Mammary epithelial cell (primary cell): ENCODE measurements at regions of chr10 and their contacts with region 1.

Region 1: GRCh38 chr10:131874991-131875451 is 25.8 kb upstream of the PPP2R2D start:
- DNase-seq: peak; percentile 66
- H3K4me3 ChIP-seq: no peak overlapping the region
- H3K27ac ChIP-seq: no peak overlapping the region
- H3K4me1 ChIP-seq: peaks cover 11% of the 10 kb centered on the region
- H3K27me3 ChIP-seq: no peaks in the 10 kb centered on the region
- CTCF ChIP-seq: peak; percentile 85 to 88

Region 2: DNA sequence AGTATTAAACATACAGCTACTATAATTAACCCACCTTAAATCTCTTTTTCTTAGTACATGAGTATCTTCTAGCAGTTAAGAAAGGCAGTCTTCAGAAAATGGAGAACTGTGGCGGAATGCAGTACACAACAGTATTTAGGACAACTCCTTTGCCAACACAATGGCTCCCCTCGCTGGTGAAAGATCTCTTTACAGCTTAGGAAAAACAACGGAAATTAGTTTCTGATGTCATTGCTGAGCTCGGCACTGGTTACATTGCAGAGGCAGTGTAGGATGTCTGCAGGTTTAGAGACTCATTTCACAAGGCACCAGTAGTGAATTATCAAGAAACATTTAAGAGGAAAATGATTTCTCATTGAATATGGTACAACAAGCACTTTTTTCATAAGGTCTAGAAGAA is 1695.4 kb before region 1 on chr10:
- CTCF ChIA-PET with region 1: no interaction called
- dilution Hi-C with region 1: no loop called
- in situ Hi-C with region 1: loop called in 1 of 2 experiments (anchors 10 kb)
- intact Hi-C with region 1: no loop called
- DNase-seq: peak; percentile 23
- H3K4me3 ChIP-seq: no peak overlapping the region
- H3K27ac ChIP-seq: no peak overlapping the region
- H3K4me1 ChIP-seq: no peaks in the 10 kb centered on the region
- H3K27me3 ChIP-seq: no peaks in the 10 kb centered on the region
- CTCF ChIP-seq: peak; percentile 20 to 34

Region 3: DNA sequence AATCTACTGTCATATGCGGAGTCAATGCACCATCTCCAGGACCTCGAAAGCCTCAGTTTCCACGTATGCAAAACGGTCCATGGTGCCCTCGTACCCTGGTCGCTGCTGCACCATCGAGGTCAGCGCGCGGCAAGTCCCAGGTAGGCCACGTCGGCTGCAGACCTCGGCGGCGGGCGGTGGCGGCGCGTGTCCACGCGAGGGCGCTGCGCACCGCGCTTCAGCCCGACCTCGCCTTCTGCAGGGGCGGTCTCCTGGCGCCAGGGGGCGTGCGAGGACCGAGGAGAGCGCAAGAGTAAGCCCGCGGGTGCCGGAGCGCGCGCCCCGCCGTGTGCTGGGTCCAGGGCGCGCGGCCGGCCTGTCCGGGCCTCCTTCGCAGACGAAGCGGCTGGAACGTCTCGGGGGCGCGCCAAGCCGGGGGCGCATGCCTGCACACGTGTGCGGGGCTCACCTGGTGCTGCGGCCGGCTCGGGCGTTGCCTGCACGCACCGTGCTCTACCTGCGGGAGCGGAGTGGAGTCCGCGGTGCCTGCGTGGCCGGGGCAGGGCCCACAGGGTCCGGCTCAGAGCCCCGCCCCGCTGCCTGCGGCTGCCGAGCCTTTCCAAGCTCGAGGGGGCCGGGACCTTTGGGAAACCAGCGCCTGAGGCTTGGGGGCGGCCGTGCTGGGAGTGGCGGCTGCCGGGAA is 1684.8 kb before region 1 on chr10:
- CTCF ChIA-PET with region 1: no interaction called
- dilution Hi-C with region 1: no loop called
- in situ Hi-C with region 1: loop called (anchors 5 to 10 kb)
- intact Hi-C with region 1: loop called (anchors 1 kb)
- DNase-seq: peak; percentile 74
- H3K4me3 ChIP-seq: peak overlapping the region; percentile 37 to 48 (median 45)
- H3K27ac ChIP-seq: no peak overlapping the region
- H3K4me1 ChIP-seq: peaks cover 7% of the 10 kb centered on the region
- H3K27me3 ChIP-seq: no peaks in the 10 kb centered on the region
- CTCF ChIP-seq: peak; percentile 93 to 94

Region 4: DNA sequence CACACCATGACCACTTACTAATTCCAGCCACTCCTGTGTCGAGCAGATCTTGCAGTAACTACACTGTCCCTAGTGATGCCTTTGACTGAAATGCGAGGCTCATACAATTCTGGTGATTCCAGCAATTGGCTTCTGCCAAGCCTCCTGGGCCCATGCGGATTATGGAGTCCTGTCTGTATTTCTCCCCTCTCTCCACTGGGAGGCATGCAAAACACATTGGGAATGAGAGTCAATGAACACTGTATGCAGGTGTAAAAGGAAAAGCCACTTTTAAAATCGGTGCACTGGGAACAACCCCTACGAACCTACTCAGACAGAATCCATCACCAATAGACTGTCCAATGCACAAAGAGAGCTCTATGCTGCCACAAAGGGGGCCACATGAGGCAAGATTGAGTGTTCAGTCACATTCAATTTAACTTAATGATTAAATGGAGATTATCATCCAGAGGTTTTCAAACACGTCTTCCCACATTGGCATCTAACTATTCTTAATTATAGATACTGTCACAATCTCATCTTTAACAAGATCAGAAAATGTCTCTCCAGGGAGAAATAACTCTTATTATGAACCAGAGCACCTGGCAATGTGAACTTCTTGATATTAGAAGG is 1188.2 kb before region 1 on chr10:
- CTCF ChIA-PET with region 1: no interaction called
- dilution Hi-C with region 1: no loop called
- in situ Hi-C with region 1: no loop called
- intact Hi-C with region 1: loop called (anchors 1 kb)
- DNase-seq: no peak
- H3K4me3 ChIP-seq: no peak overlapping the region
- H3K27ac ChIP-seq: no peak overlapping the region
- H3K4me1 ChIP-seq: no peaks in the 10 kb centered on the region
- H3K27me3 ChIP-seq: no peaks in the 10 kb centered on the region
- CTCF ChIP-seq: peak in 1 of 2 donors; percentile 20